Gastrocnemius medialis (tissue), 4 donors: ENCODE measurements at regions of chr1 and their contacts with region 1.

Region 1: GRCh38 chr1:200620273-200621131 is at the start of gene KIF14:
- DNase-seq: peak; percentile 82 to 83
- ATAC-seq: peak; percentile 96 to 98
- H3K4me3 ChIP-seq: peak within 1 kb of the TSS; percentile 74 to 78 (median 74)
- H3K27ac ChIP-seq: peak within 1 kb of the TSS; percentile 20 to 54 (median 46)
- H3K4me1 ChIP-seq: peaks cover 3 to 15% of the 10 kb centered on the region in 2 donors
- H3K27me3 ChIP-seq: no peaks in the 10 kb centered on the region
- CTCF ChIP-seq: no peak
- POLR2A ChIP-seq: no peak
- total RNA-seq, gene KIF14: 0.03 to 0.19 (median 0.07) TPM

Region 2: GRCh38 chr1:200542162-200542561 is 78.3 kb before region 1 on chr1:
- in situ Hi-C with region 1: no loop called
- intact Hi-C with region 1: no loop called
- DNase-seq: no peak
- ATAC-seq: no peak
- H3K4me3 ChIP-seq: no peak overlapping the region
- H3K27ac ChIP-seq: no peak overlapping the region
- H3K4me1 ChIP-seq: no peaks in the 10 kb centered on the region
- H3K27me3 ChIP-seq: no peaks in the 10 kb centered on the region
- CTCF ChIP-seq: no peak
- POLR2A ChIP-seq: no peak

Region 3: DNA sequence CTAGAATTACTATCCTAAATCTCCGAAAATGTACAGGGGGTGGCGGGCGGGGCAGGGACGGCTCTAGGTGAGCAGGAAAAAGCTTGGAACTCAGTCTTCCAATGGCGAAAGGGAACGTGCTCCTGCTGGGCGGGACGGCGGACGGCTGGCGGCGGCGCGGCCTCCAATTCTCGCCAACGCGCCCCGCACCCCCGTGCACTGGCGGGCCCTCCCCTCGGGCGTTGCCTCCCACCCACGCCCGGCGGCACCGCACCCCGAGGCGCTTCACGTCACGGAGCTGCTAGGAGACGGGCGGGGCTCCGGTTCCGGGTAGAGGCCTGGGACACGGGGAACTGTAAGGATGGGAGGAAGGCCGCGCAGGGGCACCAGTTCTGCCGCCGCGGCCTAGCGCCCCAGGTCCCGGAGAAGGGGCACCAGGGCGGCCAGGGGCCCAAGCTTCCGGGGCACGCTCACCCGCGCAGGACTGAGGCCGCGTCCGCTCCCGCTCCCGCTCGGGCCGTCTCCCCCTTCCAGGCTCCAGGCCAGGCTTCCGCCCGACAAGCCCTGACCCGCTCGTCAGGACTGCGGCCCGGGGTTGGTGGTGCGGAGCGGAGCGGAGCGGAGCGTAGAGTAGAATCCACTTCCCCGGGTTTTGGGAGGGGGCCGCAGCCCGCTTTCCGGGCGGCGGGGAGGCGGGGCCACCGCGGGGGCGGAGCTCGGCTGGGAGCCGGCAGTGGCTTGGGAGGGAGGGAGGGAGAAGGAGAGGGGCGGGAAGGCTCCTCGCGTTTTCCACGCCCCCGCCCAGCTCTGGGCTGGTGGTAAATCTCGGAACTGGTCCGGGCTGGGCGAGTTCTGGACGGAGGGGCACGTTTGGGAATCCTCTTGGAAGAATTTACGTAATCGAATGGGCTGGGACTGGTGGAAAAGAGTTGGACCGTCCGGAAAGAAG is 49.1 kb after region 1 on chr1 and contains the start of gene DDX59:
- in situ Hi-C with region 1: no loop called
- intact Hi-C with region 1: loop called (anchors 1 kb)
- DNase-seq: peak; percentile 92 to 95
- ATAC-seq: peak; percentile 86 to 87
- H3K4me3 ChIP-seq: peak within 1 kb of the TSS; percentile 77 to 95 (median 90)
- H3K27ac ChIP-seq: peak within 1 kb of the TSS; percentile 98 to 99 (median 99)
- H3K4me1 ChIP-seq: peaks cover 22 to 29% of the 10 kb centered on the region in 2 donors
- H3K27me3 ChIP-seq: no peaks in the 10 kb centered on the region
- CTCF ChIP-seq: peak in 1 of 5 experiments; percentile 21
- POLR2A ChIP-seq: peak; percentile 94
- total RNA-seq, gene DDX59: 36.7 to 52.7 (median 39.5) TPM

Region 4: DNA sequence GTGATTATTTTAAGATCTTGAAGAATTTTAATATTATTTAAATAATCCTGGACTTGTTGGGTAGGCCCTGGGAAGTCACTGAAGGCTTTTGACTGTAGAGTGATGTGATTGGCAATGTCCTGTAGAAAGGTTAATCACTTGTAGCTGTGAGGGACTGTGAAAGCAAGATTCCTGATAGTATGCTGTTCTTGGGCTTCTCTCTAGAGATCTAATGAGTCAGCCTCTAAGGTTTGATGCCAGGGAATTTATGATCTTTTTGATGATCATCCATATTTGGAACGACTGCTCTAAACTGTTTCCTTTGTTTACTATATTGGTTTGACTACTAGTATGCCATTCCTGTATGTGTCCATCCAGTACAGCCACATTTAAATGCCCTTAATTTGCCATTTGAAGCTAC is 174.7 kb after region 1 on chr1:
- in situ Hi-C with region 1: loop called in 3 of 4 experiments (anchors 5 to 10 kb)
- intact Hi-C with region 1: no loop called
- DNase-seq: no peak
- ATAC-seq: no peak
- H3K4me3 ChIP-seq: no peak overlapping the region
- H3K27ac ChIP-seq: no peak overlapping the region
- H3K4me1 ChIP-seq: peaks cover 9 to 22% of the 10 kb centered on the region in 2 donors
- H3K27me3 ChIP-seq: no peaks in the 10 kb centered on the region
- CTCF ChIP-seq: no peak
- POLR2A ChIP-seq: no peak

Region 5: GRCh38 chr1:200808846-200809245 is 188.3 kb after region 1 on chr1:
- in situ Hi-C with region 1: loop called in 3 of 4 experiments (anchors 5 kb)
- intact Hi-C with region 1: no loop called
- DNase-seq: no peak
- ATAC-seq: no peak
- H3K4me3 ChIP-seq: no peak overlapping the region
- H3K27ac ChIP-seq: no peak overlapping the region
- H3K4me1 ChIP-seq: no peaks in the 10 kb centered on the region
- H3K27me3 ChIP-seq: no peaks in the 10 kb centered on the region
- CTCF ChIP-seq: no peak
- POLR2A ChIP-seq: no peak

Region 6: DNA sequence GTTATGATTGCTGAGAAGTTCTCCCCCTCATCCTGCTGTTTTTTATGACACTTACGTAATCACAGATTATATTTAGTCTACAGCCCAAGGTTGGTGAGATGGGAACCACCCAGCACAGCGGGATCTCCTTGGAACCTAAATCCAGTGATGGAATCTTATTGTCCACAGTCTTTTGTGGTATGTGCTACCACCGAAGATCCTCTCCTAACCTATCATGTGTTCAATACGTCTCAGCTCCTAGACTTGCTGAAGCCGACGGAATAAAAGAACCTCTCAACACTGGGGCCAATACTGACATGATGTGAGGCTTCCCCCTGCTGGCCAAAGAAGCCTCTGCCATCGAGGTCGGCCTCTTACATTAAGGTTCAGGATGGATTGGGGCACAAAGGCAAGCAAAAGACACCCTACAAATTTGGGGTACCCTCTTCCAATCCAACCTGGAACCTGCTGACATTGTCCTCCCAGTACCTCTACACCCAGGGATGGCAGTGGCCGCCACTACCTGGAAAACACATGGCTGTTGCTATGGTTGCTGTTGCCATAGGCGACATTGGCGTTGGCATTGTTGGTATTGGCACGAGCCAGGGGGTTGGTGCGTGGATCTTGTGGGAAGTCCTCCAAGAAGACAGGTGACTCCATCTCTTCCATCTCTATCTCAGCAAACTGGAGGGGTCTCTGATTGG is 422.4 kb after region 1 on chr1:
- in situ Hi-C with region 1: loop called in 1 of 4 experiments (anchors 25 kb)
- intact Hi-C with region 1: no loop called
- DNase-seq: peak; percentile 38 to 52
- ATAC-seq: peak; percentile 77 to 85
- H3K4me3 ChIP-seq: no peak overlapping the region
- H3K27ac ChIP-seq: peak overlapping the region; percentile 11 to 44 (median 33)
- H3K4me1 ChIP-seq: peaks cover 0 to 6% of the 10 kb centered on the region in 2 donors
- H3K27me3 ChIP-seq: no peaks in the 10 kb centered on the region
- CTCF ChIP-seq: peak; percentile 73 to 86 (median 82)
- POLR2A ChIP-seq: no peak